Spleen (tissue), 13 donors: ENCODE measurements at regions of chr4 and their contacts with region 1.

Region 1: GRCh38 chr4:120977435-120977997 is 55.0 kb upstream of the PRDM5 start:
- DNase-seq: no peak
- H3K4me3 ChIP-seq: no peak overlapping the region
- H3K27ac ChIP-seq: no peak overlapping the region
- H3K4me1 ChIP-seq: no peaks in the 10 kb centered on the region
- H3K27me3 ChIP-seq: no peaks in the 10 kb centered on the region
- CTCF ChIP-seq: peak in 5 of 11 experiments; percentile 16 to 43 (median 31)
- POLR2A ChIP-seq: no peak

Region 2: DNA sequence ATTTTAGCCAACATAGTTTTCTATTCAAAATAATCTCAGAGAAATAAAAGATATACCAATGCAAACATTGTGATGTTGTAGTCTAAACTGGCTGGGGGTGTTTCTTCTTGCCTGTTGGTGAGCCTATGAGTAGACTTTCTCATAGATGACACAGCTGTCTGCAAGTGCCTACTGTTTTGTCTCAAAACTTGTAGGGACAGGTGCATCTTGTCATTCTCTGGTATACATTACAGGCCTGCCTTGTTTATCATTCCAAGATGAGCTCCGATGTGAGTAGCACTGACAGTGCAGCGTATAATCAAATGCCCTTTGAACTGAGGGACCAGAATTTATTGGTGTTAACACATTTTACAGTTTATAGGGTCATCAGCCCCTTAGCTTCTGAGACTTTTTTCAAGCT is 408.8 kb before region 1 on chr4:
- intact Hi-C with region 1: no loop called
- DNase-seq: no peak
- H3K4me3 ChIP-seq: no peak overlapping the region
- H3K27ac ChIP-seq: no peak overlapping the region
- H3K4me1 ChIP-seq: no peaks in the 10 kb centered on the region
- H3K27me3 ChIP-seq: no peaks in the 10 kb centered on the region
- CTCF ChIP-seq: no peak
- POLR2A ChIP-seq: no peak

Region 3: GRCh38 chr4:120718979-120719566 is 258.4 kb before region 1 on chr4:
- intact Hi-C with region 1: loop called (anchors 10 kb)
- DNase-seq: no peak
- H3K4me3 ChIP-seq: no peak overlapping the region
- H3K27ac ChIP-seq: no peak overlapping the region
- H3K4me1 ChIP-seq: no peaks in the 10 kb centered on the region
- H3K27me3 ChIP-seq: no peaks in the 10 kb centered on the region
- CTCF ChIP-seq: peak in 7 of 11 experiments; percentile 32 to 47 (median 40)
- POLR2A ChIP-seq: no peak

Region 4: DNA sequence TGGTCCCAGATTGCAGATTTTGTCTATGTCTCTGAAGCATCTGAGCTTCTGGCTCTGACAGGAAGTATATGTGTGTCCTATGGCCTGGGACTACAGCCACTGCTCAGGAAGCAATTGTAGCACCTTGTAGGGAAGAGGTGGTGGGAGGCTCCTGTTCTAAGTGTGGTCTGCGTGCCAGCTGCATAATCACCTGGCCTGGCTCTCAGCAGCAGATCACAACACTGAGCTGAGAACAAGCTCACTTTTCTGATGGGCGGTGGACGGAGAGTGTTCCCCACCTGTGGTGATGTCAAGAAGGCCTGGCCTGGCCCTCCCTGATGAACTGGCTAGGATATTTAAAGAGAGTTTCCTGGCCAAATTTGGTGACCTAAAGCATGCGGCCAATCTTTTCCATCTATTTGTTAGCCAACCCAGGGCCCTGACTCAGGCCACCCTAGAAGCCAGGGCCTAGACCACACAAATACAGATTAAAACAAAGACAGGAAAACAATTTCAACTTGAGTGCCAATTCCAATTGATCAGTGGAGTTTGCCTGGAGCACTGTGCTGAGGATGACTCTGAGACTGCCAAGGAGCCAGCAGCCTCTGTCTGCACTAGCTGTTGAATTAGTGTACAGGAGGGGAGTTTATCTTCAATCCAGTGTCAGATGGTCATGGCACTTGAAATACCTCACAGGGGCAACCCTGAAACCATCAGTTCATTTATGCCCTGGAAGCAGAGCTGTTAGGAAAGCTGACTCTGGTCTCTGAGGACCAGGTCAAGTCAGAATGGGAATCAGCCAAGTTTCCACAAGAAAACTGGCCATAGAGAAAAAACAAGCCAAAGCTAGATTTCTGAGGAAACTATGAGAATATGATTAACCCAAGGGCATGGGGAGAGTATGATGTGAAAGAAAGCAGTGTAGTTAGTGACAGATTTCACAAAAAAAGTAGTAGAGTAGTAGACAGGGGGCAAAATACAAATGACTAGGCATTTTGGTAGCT is 102.4 kb before region 1 on chr4:
- intact Hi-C with region 1: no loop called
- DNase-seq: peak; percentile 62
- H3K4me3 ChIP-seq: no peak overlapping the region
- H3K27ac ChIP-seq: no peak overlapping the region
- H3K4me1 ChIP-seq: no peaks in the 10 kb centered on the region
- H3K27me3 ChIP-seq: no peaks in the 10 kb centered on the region
- CTCF ChIP-seq: no peak
- POLR2A ChIP-seq: no peak